ENCODE measurements at regions of chr11 and their contacts with region 1.

Region 1: GRCh38 chr11:76734456-76735420 is 48.4 kb upstream of the TSKU start:
- DNase-seq: no peak
- H3K4me3 ChIP-seq: no peak overlapping the region
- H3K27ac ChIP-seq: no peak overlapping the region
- H3K4me1 ChIP-seq: no peaks in the 10 kb centered on the region
- H3K27me3 ChIP-seq: no peaks in the 10 kb centered on the region
- CTCF ChIP-seq: no peak

Region 2: GRCh38 chr11:76686261-76687079 is 48.3 kb before region 1 on chr11:
- CTCF ChIA-PET with region 1: no interaction called
- POLR2A ChIA-PET with region 1: no interaction called
- intact Hi-C with region 1: no loop called
- DNase-seq: no peak
- H3K4me3 ChIP-seq: no peak overlapping the region
- H3K27ac ChIP-seq: no peak overlapping the region
- H3K4me1 ChIP-seq: no peaks in the 10 kb centered on the region
- H3K27me3 ChIP-seq: no peaks in the 10 kb centered on the region
- CTCF ChIP-seq: no peak

Region 3: DNA sequence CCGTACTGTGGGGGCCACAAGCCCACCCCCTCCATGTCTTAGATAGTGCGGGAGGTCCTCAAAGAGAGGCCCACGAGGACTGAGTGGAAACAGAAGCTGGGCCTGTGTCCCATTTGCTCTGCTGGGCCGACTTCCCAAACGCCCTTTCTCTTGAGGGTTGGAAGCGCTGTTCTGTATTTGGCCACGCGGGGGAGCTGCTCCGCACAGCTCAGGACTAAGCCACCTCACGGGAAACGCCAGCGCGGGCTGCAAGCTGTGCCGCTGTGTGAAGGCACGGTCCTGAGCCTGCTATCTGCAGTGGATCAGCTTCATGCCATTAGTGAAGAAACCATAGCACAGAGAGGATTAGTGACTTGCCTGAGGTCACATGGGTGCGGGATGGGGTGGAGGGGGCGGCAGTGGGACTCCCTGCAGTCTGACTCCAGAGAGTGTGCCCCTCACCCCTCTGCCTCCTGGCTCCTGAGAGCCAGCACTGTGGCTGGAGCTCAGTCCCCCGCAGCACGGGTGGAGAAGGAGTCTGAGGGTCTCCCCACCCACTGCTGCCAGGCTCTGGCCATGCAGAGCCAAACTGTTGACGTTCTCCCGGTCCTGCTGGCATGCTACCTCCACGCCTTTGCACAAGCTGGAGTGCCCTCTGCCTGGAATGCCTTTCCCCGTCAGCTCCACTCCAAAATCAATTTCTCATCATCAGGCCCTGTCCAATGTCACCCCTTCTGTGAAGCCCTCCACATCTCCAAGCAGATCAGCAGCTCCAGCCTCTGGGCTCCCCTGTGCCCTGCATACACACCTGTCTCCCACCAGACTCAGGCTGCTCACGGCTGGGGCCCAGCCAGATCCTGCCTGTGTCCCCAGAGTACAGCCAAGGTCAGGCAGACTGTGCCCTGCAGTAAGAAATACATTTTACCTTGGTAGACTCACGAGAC is 12.7 kb before region 1 on chr11:
- CTCF ChIA-PET with region 1: interaction called, 13 read pairs
- POLR2A ChIA-PET with region 1: interaction called, 11 read pairs
- intact Hi-C with region 1: no loop called
- DNase-seq: peak; percentile 93
- H3K4me3 ChIP-seq: no peak overlapping the region
- H3K27ac ChIP-seq: no peak overlapping the region
- H3K4me1 ChIP-seq: no peaks in the 10 kb centered on the region
- H3K27me3 ChIP-seq: peaks cover 10% of the 10 kb centered on the region
- CTCF ChIP-seq: peak; percentile 99

Region 4: GRCh38 chr11:76799066-76799804 is 64.5 kb after region 1 on chr11:
- CTCF ChIA-PET with region 1: interaction called, 31 read pairs
- POLR2A ChIA-PET with region 1: no interaction called
- intact Hi-C with region 1: loop called (anchors 1 kb)
- DNase-seq: peak; percentile 84
- H3K4me3 ChIP-seq: peak overlapping the region; percentile 23
- H3K27ac ChIP-seq: no peak overlapping the region
- H3K4me1 ChIP-seq: peaks cover 18% of the 10 kb centered on the region
- H3K27me3 ChIP-seq: no peaks in the 10 kb centered on the region
- CTCF ChIP-seq: peak; percentile 95

Region 5: DNA sequence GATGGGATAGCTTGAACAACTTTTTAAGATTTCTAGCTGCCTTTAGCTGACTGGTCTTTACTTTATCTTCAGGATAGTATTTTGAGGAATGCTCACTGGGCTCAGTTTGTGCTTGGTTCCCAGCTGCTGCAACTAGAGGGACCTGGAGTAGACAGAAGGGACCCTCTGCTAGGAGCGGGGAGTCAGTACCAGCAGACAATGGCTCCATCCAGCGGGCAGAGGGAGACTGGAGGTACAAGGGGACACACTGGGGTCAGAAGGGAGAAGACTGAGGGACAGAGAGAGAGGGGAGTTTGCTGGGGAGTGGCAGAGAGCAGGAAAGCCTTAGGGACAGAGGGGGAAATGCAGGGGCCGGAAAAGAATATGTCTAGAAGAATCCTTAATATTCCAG is 103.9 kb after region 1 on chr11:
- CTCF ChIA-PET with region 1: interaction called, 3 read pairs
- POLR2A ChIA-PET with region 1: no interaction called
- intact Hi-C with region 1: loop called (anchors 1 kb)
- DNase-seq: peak; percentile 63
- H3K4me3 ChIP-seq: no peak overlapping the region
- H3K27ac ChIP-seq: no peak overlapping the region
- H3K4me1 ChIP-seq: peaks cover 5% of the 10 kb centered on the region
- H3K27me3 ChIP-seq: peaks cover 4% of the 10 kb centered on the region
- CTCF ChIP-seq: peak; percentile 64

Region 6: DNA sequence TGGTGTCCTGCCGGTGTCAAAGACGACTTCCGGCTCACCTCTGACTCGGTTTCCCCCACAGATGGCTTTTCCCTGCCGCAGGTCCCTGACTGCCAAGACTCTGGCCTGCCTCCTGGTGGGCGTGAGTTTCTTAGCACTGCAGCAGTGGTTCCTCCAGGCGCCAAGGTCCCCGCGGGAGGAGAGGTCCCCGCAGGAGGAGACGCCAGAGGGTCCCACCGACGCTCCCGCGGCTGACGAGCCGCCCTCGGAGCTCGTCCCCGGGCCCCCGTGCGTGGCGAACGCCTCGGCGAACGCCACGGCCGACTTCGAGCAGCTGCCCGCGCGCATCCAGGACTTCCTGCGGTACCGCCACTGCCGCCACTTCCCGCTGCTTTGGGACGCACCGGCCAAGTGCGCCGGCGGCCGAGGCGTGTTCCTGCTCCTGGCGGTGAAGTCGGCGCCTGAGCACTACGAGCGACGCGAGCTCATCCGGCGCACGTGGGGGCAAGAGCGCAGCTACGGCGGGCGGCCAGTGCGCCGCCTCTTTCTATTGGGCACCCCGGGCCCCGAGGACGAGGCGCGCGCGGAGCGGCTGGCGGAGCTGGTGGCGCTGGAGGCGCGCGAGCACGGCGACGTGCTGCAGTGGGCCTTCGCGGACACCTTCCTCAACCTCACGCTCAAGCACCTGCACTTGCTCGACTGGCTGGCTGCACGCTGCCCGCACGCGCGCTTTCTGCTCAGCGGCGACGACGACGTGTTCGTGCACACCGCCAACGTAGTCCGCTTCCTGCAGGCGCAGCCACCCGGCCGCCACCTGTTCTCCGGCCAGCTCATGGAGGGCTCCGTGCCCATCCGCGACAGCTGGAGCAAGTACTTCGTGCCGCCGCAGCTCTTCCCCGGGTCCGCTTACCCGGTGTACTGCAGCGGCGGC is 305.0 kb after region 1 on chr11:
- CTCF ChIA-PET with region 1: no interaction called
- POLR2A ChIA-PET with region 1: no interaction called
- intact Hi-C with region 1: loop called (anchors 2 kb)
- DNase-seq: peak; percentile 76
- H3K4me3 ChIP-seq: peak overlapping the region; percentile 44
- H3K27ac ChIP-seq: no peak overlapping the region
- H3K4me1 ChIP-seq: no peaks in the 10 kb centered on the region
- H3K27me3 ChIP-seq: no peaks in the 10 kb centered on the region
- CTCF ChIP-seq: peak; percentile 79

Measured in A673 (cell line).